Mammary epithelial cell (primary cell): ENCODE measurements at regions of chr6 and their contacts with region 1.

Region 1: DNA sequence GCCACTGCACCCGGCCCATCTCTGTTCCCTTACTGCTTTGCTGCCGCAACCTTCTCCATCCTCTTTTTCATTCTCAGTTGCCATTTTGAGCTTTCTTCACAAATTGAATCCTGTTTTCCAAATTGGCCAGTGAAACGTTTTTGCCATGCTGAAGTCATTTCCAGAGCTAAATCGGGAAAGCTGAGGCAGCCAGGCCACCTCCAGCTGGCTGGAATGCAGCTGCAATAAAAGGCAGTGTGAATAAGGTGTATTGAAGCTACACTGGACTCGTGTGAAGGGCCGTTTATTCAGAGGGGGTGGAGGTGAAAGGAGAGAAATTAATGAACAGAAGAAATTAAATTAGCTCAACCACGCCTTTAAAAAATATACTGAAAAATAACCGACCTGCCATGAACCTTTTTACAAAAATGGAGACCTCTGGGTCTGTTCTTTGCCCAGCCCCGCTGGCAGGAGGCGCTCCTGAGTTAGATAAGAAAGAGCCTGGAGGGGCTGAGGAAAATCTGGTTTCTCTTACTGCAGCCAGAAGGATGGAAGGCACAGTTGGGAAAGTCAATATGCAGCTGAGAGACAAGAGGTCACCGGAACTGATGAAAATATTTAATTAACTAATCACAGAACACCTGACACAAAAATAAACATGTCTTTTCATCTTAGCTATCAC is 283.9 kb downstream of the FOXC1 start:
- DNase-seq: no peak
- H3K4me3 ChIP-seq: no peak overlapping the region
- H3K27ac ChIP-seq: no peak overlapping the region
- H3K4me1 ChIP-seq: peaks cover 23% of the 10 kb centered on the region
- H3K27me3 ChIP-seq: no peaks in the 10 kb centered on the region
- CTCF ChIP-seq: no peak

Region 2: GRCh38 chr6:1916334-1917070 is 22.9 kb after region 1 on chr6:
- CTCF ChIA-PET with region 1: no interaction called
- dilution Hi-C with region 1: no loop called
- in situ Hi-C with region 1: no loop called
- intact Hi-C with region 1: loop called (anchors 1 kb)
- DNase-seq: peak; percentile 89
- H3K4me3 ChIP-seq: no peak overlapping the region
- H3K27ac ChIP-seq: peak overlapping the region; percentile 97
- H3K4me1 ChIP-seq: peaks cover 29% of the 10 kb centered on the region
- H3K27me3 ChIP-seq: no peaks in the 10 kb centered on the region
- CTCF ChIP-seq: no peak

Region 3: DNA sequence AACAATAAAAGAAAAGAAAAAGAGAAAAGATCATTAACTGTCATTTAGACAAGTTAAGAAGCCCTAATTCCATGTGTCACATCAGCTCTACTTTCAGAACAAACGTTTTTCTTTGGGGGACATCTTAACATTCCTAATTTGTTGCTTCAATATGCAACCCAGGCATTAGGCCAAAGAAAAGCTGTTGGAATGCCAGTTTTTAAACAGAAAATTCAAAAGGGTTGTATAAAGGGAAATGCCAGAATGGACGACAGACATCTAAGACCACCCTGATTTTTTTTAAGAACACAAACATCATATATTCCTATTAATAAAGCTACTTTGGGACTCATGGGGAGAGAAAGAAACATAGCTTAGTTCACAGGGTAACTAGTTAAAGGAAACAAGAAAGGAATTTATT is 36.8 kb after region 1 on chr6:
- CTCF ChIA-PET with region 1: no interaction called
- dilution Hi-C with region 1: no loop called
- in situ Hi-C with region 1: no loop called
- intact Hi-C with region 1: no loop called
- DNase-seq: no peak
- H3K4me3 ChIP-seq: no peak overlapping the region
- H3K27ac ChIP-seq: no peak overlapping the region
- H3K4me1 ChIP-seq: no peaks in the 10 kb centered on the region
- H3K27me3 ChIP-seq: no peaks in the 10 kb centered on the region
- CTCF ChIP-seq: no peak

Region 4: GRCh38 chr6:1952726-1953360 is 59.2 kb after region 1 on chr6:
- CTCF ChIA-PET with region 1: no interaction called
- dilution Hi-C with region 1: no loop called
- in situ Hi-C with region 1: no loop called
- intact Hi-C with region 1: loop called (anchors 5 kb)
- DNase-seq: peak; percentile 99
- H3K4me3 ChIP-seq: peak overlapping the region in 1 of 3 experiments; percentile 7
- H3K27ac ChIP-seq: peak overlapping the region; percentile 97
- H3K4me1 ChIP-seq: peaks cover 13% of the 10 kb centered on the region
- H3K27me3 ChIP-seq: no peaks in the 10 kb centered on the region
- CTCF ChIP-seq: peak in 1 of 2 donors; percentile 6